Ascending aorta (tissue), 2 donors: ENCODE measurements at regions of chr3 and their contacts with region 1.

Region 1: DNA sequence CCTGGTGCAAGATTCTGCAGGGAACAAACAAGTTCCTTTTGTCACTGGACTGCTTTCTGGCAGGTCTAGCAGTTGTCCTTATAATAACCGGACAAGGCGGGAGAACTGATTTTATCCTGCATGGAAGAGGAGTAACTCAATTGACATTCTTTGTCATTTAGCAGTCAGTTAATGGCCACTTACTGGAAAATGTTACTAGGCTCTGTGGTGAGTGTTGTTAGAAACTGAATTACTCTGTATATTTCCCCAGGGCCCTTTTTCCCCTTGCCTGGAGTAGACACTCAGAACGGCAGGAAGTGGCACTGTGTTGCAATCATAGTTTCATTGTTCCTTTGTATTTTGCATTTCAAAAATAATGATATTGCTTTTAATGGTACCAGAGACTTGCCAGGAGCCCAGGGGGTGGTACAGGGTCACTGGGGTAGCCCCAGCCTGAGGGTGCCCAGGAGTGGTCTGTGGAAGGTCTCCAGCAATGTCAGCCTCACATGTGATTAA is 318.6 kb upstream of the LRRFIP2 start:
- DNase-seq: peak in 1 of 2 donors; percentile 79
- H3K4me3 ChIP-seq: no peak overlapping the region
- H3K27ac ChIP-seq: peak overlapping the region; percentile 85 to 90
- H3K4me1 ChIP-seq: peaks cover 7 to 48% of the 10 kb centered on the region in 2 donors
- H3K27me3 ChIP-seq: no peaks in the 10 kb centered on the region
- CTCF ChIP-seq: no peak

Region 2: DNA sequence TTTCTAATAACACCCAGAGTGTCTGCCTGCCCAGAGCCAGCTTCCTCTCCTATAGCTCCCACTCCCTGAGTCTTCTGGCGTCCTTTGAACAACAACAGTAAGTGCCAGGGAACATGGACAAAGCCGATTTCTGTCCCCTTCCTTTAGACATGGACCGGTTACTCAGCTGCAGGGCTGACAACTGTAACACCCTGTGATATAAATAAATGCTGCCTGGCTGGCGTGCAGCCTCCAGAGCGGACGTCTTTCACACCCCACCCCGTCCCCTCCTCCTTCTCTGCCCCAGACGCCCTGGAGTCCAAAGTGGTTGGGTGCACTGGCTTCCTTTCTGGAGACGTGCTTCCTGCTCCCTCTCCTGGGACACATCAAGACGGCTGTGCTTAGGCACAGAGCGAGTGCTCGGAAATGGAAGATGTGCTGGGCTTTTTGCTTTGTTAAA is 36.7 kb before region 1 on chr3:
- intact Hi-C with region 1: loop called (anchors 1 kb)
- DNase-seq: peak; percentile 66 to 94
- H3K4me3 ChIP-seq: peak overlapping the region in 1 of 2 donors; percentile 82
- H3K27ac ChIP-seq: peak overlapping the region; percentile 94 to 95
- H3K4me1 ChIP-seq: peaks cover 15 to 49% of the 10 kb centered on the region in 2 donors
- H3K27me3 ChIP-seq: no peaks in the 10 kb centered on the region
- CTCF ChIP-seq: no peak

Region 3: DNA sequence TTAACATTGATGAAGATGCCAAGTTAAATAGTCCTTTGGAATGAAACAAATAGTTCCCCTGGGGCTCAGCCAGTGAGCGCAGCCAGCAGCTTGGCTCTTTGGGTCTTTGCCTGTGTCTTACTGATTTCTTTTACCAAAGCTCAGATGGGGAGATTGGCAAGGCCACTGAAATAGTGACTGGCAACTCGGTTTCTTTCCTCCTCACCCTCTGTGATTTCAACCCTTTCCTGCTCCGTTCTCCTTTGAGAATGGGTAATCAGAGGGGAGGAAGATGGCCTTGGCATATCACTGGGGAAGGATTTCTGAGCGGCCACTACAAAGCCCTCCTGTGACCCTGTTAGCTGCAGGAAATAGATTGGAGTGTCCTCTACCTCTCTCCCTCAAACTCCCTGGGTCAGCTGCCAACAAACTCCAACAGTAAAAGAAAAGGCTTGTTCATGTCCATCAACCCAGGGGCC is 18.5 kb after region 1 on chr3:
- intact Hi-C with region 1: loop called (anchors 1 kb)
- DNase-seq: peak in 1 of 2 donors; percentile 83
- H3K4me3 ChIP-seq: peak overlapping the region in 1 of 2 donors; percentile 27
- H3K27ac ChIP-seq: peak overlapping the region; percentile 67 to 93
- H3K4me1 ChIP-seq: peaks cover 22 to 34% of the 10 kb centered on the region in 2 donors
- H3K27me3 ChIP-seq: no peaks in the 10 kb centered on the region
- CTCF ChIP-seq: no peak

Region 4: GRCh38 chr3:37526511-37526910 is 33.5 kb after region 1 on chr3:
- intact Hi-C with region 1: loop called (anchors 5 kb)
- DNase-seq: peak; percentile 75 to 92
- H3K4me3 ChIP-seq: no peak overlapping the region
- H3K27ac ChIP-seq: peak overlapping the region; percentile 77 to 84
- H3K4me1 ChIP-seq: peaks cover 6 to 17% of the 10 kb centered on the region in 2 donors
- H3K27me3 ChIP-seq: no peaks in the 10 kb centered on the region
- CTCF ChIP-seq: no peak

Region 5: GRCh38 chr3:37580237-37580636 is 87.2 kb after region 1 on chr3:
- intact Hi-C with region 1: no loop called
- DNase-seq: peak in 1 of 2 donors; percentile 91
- H3K4me3 ChIP-seq: no peak overlapping the region
- H3K27ac ChIP-seq: peak overlapping the region; percentile 74 to 78
- H3K4me1 ChIP-seq: peaks cover 0 to 25% of the 10 kb centered on the region in 2 donors
- H3K27me3 ChIP-seq: no peaks in the 10 kb centered on the region
- CTCF ChIP-seq: no peak